BJ (cell line): ENCODE measurements at regions of chr13 and their contacts with region 1.

Region 1: GRCh38 chr13:41897126-41897525 is 63.8 kb downstream of the VWA8 start:
- DNase-seq: no peak
- H3K4me3 ChIP-seq: no peak overlapping the region
- H3K27me3 ChIP-seq: no peaks in the 10 kb centered on the region
- CTCF ChIP-seq: no peak

Region 2: GRCh38 chr13:41909524-41909923 is 12.4 kb after region 1 on chr13:
- CTCF ChIA-PET with region 1: no interaction called
- POLR2A ChIA-PET with region 1: no interaction called
- DNase-seq: no peak
- H3K4me3 ChIP-seq: no peak overlapping the region
- H3K27me3 ChIP-seq: no peaks in the 10 kb centered on the region
- CTCF ChIP-seq: no peak

Region 3: GRCh38 chr13:41944635-41945397 is 47.7 kb after region 1 on chr13:
- CTCF ChIA-PET with region 1: no interaction called
- POLR2A ChIA-PET with region 1: no interaction called
- DNase-seq: no peak
- H3K4me3 ChIP-seq: no peak overlapping the region
- H3K27me3 ChIP-seq: no peaks in the 10 kb centered on the region
- CTCF ChIP-seq: no peak

Region 4: GRCh38 chr13:41955605-41956004 is 58.5 kb after region 1 on chr13:
- CTCF ChIA-PET with region 1: no interaction called
- POLR2A ChIA-PET with region 1: interaction called, 12 read pairs
- DNase-seq: no peak
- H3K4me3 ChIP-seq: no peak overlapping the region
- H3K27me3 ChIP-seq: no peaks in the 10 kb centered on the region
- CTCF ChIP-seq: no peak